ENCODE measurements at regions of chr16 and their contacts with region 1.

Region 1: DNA sequence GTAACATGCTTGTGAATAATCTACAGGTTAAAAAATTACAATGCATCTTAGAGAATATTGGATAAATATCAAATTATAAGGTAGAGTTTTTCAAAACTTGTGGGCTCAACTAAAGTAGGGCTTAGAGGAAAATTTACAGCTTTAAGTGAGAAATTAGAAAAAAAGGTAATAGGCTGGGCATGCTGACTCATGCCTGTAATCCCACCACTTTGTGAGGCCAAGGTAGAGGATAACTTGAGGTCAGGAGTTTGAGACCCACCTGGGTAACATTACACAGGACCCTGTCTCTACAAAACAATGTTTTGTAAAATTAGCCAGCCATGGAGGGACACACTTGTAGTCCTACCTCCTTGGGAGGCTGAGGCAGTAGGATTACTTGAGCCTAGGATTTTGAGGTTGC is 4.5 kb downstream of the ATF7IP2 start:
- DNase-seq: no peak
- H3K4me3 ChIP-seq: no peak overlapping the region
- H3K4me3 Mint-ChIP-seq: no peak overlapping the region
- H3K27ac ChIP-seq: no peak overlapping the region
- H3K27ac Mint-ChIP-seq: no peak overlapping the region
- H3K4me1 ChIP-seq: peaks cover 12 to 15% of the 10 kb centered on the region in 2 donors
- H3K4me1 Mint-ChIP-seq: peaks cover 20% of the 10 kb centered on the region
- H3K27me3 ChIP-seq: no peaks in the 10 kb centered on the region
- H3K27me3 Mint-ChIP-seq: peaks cover 0 to 1% (median 0%) of the 10 kb centered on the region in 3 donors
- CTCF ChIP-seq: no peak

Region 2: DNA sequence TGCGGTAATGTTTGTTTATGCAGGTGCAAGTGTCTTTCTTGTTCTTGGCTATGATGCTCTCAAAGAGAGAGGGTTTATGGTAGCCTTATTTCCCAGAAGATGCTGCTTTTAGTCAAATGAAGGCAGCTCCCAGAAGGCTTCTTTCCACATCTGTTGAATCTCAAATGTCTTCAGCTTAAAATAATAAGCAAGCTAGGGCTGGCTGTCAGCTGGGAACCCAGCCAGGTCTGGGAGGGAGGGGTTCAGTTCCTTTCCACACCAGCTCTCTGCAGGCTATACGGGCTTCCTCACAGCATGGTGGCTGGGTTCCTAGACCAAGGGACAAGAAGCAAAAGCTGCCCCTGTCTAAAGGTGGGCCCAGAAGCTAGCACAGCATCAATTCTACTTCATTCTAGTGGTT is 51.9 kb before region 1 on chr16:
- intact Hi-C with region 1: loop called in 1 of 2 experiments (anchors 10 kb)
- DNase-seq: no peak
- H3K4me3 ChIP-seq: no peak overlapping the region
- H3K4me3 Mint-ChIP-seq: no peak overlapping the region
- H3K27ac ChIP-seq: no peak overlapping the region
- H3K27ac Mint-ChIP-seq: no peak overlapping the region
- H3K4me1 ChIP-seq: peaks cover 0 to 13% of the 10 kb centered on the region in 2 donors
- H3K4me1 Mint-ChIP-seq: peaks cover 4% of the 10 kb centered on the region
- H3K27me3 ChIP-seq: no peaks in the 10 kb centered on the region
- H3K27me3 Mint-ChIP-seq: peaks cover 0 to 5% (median 2%) of the 10 kb centered on the region in 3 donors
- CTCF ChIP-seq: no peak

Region 3: GRCh38 chr16:10419712-10420111 is 29.4 kb after region 1 on chr16:
- intact Hi-C with region 1: no loop called
- DNase-seq: no peak
- H3K4me3 ChIP-seq: no peak overlapping the region
- H3K4me3 Mint-ChIP-seq: no peak overlapping the region
- H3K27ac ChIP-seq: no peak overlapping the region
- H3K27ac Mint-ChIP-seq: no peak overlapping the region
- H3K4me1 ChIP-seq: no peaks in the 10 kb centered on the region
- H3K4me1 Mint-ChIP-seq: no peaks in the 10 kb centered on the region
- H3K27me3 ChIP-seq: no peaks in the 10 kb centered on the region
- H3K27me3 Mint-ChIP-seq: no peaks in the 10 kb centered on the region
- CTCF ChIP-seq: no peak

Measured in CD14-positive monocyte (primary cell).